ENCODE measurements at regions of chr6 and their contacts with region 1.

Region 1: GRCh38 chr6:43129434-43130194 is 41.5 kb upstream of the SRF start:
- DNase-seq: peak; percentile 33
- H3K4me3 ChIP-seq: no peak overlapping the region
- H3K27ac ChIP-seq: no peak overlapping the region
- H3K4me1 ChIP-seq: no peaks in the 10 kb centered on the region
- H3K27me3 ChIP-seq: no peaks in the 10 kb centered on the region
- CTCF ChIP-seq: peak; percentile 46 to 56
- POLR2A ChIP-seq: no peak

Region 2: DNA sequence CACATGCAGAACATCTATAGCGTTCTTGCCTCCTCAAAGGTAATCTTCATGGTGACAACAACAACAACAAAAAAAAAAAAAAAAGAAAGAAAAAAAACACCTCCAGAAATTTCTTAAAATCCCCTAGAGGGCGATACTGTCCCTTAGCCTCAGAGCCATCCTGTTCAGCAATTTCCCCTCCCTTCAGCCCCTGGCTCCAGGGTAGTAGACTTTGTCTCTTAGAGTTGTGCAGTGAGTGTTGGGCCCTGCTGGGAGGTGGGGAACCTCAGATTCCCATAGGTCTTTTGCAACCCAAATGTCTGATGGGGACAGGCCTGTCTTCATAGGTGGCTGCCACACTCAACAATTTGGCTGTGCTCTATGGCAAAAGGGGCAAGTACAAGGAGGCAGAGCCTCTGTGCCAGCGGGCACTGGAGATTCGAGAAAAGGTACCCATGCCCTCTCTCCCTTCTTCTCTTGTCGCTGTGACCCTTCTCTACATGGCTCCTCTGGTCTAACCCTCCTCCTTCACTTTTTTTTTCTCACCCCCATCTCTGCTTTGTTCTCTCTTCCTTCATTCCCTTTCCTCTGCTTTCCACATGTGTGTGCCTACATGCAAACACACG is 59.5 kb before region 1 on chr6:
- CTCF ChIA-PET with region 1: interaction called, 3 read pairs
- POLR2A ChIA-PET with region 1: no interaction called
- dilution Hi-C with region 1: no loop called
- intact Hi-C with region 1: loop called (anchors 1 kb)
- DNase-seq: peak; percentile 37
- H3K4me3 ChIP-seq: no peak overlapping the region
- H3K27ac ChIP-seq: no peak overlapping the region
- H3K4me1 ChIP-seq: no peaks in the 10 kb centered on the region
- H3K27me3 ChIP-seq: no peaks in the 10 kb centered on the region
- CTCF ChIP-seq: peak; percentile 48 to 49
- POLR2A ChIP-seq: no peak

Region 3: GRCh38 chr6:43075670-43076463 is 53.7 kb before region 1 on chr6 and contains the start of gene PTK7:
- CTCF ChIA-PET with region 1: interaction called, 11 read pairs
- POLR2A ChIA-PET with region 1: no interaction called
- dilution Hi-C with region 1: no loop called
- intact Hi-C with region 1: no loop called
- DNase-seq: peak; percentile 40
- H3K4me3 ChIP-seq: peak within 1 kb of the TSS; percentile 57 to 88 (median 74)
- H3K27ac ChIP-seq: peak within 1 kb of the TSS; percentile 2
- H3K4me1 ChIP-seq: peaks cover 7% of the 10 kb centered on the region
- H3K27me3 ChIP-seq: peaks cover 0 to 6% of the 10 kb centered on the region in 2 experiments
- CTCF ChIP-seq: no peak
- POLR2A ChIP-seq: no peak
- total RNA-seq, gene PTK7: 65.3 and 65.6 TPM in 2 replicates

Measured in endothelial cell of umbilical vein (primary cell).